Tibial artery (tissue), 4 donors: ENCODE measurements at regions of chr19 and their contacts with region 1.

Region 1: GRCh38 chr19:10928525-10929401 is at the starts of genes TIMM29 and YIPF2:
- DNase-seq: peak; percentile 98 to 99
- H3K4me3 ChIP-seq: peak within 1 kb of the TSS; percentile 100
- H3K27ac ChIP-seq: peak within 1 kb of the TSS; percentile 90 to 93
- H3K4me1 ChIP-seq: peaks cover 0 to 35% (median 24%) of the 10 kb centered on the region in 4 donors
- H3K27me3 ChIP-seq: no peaks in the 10 kb centered on the region
- CTCF ChIP-seq: no peak

Region 2: DNA sequence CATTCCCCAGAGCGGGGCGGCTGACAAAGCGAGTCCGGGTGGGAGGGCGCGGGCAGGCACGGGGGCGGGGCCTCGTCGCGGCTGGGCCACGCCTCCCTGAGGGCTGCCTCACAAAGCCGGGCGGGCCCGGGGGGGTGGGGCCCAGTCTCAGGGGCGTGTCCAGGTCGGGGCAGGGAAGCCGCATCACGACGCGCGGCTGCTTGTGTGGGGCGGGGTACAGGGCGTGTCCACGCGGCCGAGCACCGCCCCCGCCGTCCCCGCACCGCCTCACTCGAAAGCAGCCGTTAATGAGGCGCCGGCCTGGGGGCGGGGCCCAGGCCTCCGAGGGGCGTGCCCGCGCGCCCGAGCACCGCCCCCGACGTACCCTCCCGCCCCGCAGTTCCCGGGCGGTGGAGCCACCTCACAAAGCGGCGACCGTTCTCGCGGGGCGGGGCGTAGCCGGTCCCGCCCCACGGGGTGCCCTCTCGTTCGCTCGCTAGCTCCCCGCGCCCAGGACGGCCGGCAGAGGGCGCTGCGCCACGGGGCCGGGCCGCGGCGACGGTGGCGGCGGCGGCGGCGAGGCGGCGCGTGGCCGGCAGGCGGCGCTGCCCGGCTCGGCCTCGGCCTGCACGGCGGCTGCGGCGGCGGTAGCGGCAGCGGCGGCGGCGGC is 57.7 kb before region 1 on chr19 and contains the start of gene CARM1:
- intact Hi-C with region 1: loop called (anchors 5 kb)
- DNase-seq: peak; percentile 99 to 100
- H3K4me3 ChIP-seq: peak within 1 kb of the TSS; percentile 76 to 93
- H3K27ac ChIP-seq: peak within 1 kb of the TSS; percentile 86 to 87
- H3K4me1 ChIP-seq: peaks cover 7 to 30% (median 17%) of the 10 kb centered on the region in 4 donors
- H3K27me3 ChIP-seq: no peaks in the 10 kb centered on the region
- CTCF ChIP-seq: peak; percentile 56 to 99